ENCODE measurements at regions of chr10 and their contacts with region 1.

Region 1: DNA sequence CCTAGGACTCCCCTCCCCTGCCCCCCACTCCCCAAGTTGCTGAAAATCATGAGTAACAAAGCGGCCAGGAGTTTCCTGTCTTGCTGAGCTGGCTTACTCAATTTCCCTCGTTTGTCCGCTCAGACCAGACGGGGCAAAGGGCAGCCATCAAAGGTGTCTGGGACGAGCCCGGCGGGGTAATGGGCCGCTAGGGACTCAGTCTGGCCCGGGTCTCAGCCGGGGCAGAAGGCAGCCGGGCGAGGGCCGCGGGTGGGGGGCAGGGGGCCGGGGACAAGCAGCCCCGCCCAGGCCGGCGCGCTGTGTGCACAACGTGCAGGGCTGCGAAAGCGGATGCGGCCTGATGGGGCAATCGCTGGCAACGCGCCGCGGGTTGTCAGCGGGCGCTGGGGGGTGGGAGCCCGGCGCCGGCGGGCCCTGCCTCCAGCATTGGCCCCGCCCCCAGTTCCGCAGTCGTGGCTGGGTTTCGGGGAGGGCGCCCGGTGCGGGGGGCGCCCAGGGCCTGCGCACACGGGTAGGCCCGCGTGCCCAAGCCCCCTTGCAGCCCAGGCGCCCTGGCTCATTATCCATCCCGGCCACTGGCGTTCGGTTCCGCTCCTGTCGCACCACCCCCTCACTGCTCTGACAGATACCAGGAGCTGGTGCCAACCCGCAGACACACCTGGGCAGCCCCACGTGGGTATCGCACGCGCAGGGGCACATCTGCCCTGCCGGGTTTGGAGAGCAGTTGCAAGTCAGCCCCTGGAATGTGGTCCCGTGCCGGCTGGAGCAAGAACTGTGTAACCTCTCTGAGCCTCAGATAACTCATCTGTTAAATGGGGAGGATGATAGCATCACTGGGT is 35.1 kb downstream of the DNAJB12 start:
- DNase-seq: peak; percentile 97
- ATAC-seq: peak; percentile 74 to 81 (median 79)
- H3K4me3 ChIP-seq: peak overlapping the region; percentile 56
- H3K27ac ChIP-seq: peak overlapping the region; percentile 87
- H3K4me1 ChIP-seq: peaks cover 51% of the 10 kb centered on the region
- H3K27me3 ChIP-seq: no peaks in the 10 kb centered on the region
- CTCF ChIP-seq: no peak

Region 2: DNA sequence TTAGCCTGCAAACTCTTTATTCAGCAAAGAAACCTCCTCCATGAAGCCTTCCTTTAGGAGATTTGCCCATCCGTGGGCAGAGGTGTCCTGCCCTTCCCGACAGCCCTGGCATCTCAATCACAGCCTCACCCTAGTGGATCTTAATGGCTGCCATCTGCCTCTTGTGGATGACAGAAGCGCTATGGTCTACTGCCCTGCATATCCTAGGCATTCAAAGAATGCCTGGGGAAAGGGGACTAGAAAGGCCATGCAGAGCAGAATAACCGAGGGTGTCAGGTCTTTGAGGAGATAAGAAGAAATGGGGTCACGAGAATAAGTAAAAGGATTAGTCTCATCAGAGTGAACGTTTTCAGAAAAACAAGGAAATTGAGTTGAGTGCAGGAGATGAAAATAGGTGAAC is 173.6 kb before region 1 on chr10:
- intact Hi-C with region 1: no loop called
- DNase-seq: no peak
- ATAC-seq: no peak
- H3K4me3 ChIP-seq: no peak overlapping the region
- H3K27ac ChIP-seq: no peak overlapping the region
- H3K4me1 ChIP-seq: no peaks in the 10 kb centered on the region
- H3K27me3 ChIP-seq: no peaks in the 10 kb centered on the region
- CTCF ChIP-seq: no peak

Region 3: GRCh38 chr10:72215652-72216549 is 103.7 kb before region 1 on chr10 and contains the starts of genes ANAPC16 and ASCC1:
- intact Hi-C with region 1: no loop called
- DNase-seq: peak; percentile 92 to 96
- ATAC-seq: peak; percentile 96 to 98 (median 98)
- H3K4me3 ChIP-seq: peak within 1 kb of the TSS; percentile 78
- H3K27ac ChIP-seq: peak within 1 kb of the TSS; percentile 97
- H3K4me1 ChIP-seq: peaks cover 50% of the 10 kb centered on the region
- H3K27me3 ChIP-seq: no peaks in the 10 kb centered on the region
- CTCF ChIP-seq: no peak
- total RNA-seq, gene ANAPC16: 80.3 to 144 (median 119) TPM
- total RNA-seq, gene ASCC1: 15.3 to 22.4 (median 19.4) TPM

Region 4: DNA sequence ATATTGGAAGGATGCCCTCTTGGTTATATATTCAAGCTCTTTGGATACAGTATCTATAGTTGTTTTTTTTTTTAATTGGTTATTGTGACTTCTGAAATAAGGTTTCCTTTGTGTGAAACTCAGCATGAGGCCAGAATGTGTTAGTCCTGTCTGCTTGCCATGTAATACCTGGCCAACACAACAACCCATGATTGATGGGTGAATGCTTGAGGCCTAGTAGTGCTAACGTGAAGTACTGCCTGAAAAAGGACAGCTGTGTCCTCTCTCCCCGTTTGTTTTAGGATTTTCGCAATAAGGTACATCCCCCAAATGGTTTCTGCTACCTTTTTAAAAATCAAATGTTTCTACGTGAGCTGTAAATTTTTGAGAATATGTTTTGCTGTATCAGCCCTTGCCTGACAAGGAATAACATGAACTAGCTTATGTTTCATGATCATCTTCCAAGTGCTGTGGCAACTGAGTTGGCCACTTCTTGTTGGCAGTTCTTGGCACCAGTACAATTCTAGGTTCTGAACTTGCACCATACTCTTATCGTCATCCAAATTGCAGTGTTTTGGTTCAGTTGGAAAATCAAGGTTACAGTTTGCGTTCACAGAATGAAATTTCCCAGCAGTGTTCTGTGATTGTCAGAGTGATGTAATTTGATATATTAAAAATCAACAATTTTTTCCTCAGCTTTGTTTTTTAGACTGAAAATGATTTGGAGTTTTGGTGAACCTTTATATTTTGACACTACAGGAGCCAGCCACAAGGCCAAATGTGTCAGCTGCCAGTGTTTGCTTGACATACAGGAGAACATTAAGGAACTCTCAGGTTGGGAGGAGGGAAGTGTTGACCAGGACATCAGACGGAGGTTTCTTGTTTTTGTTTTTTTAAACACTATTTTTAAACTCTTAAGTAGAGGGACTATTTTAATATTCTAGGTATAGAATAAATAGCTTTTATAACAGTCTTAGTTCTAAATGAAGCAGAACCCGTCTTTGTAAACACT is 90.1 kb before region 1 on chr10:
- intact Hi-C with region 1: loop called in 1 of 2 experiments (anchors 10 kb)
- DNase-seq: no peak
- ATAC-seq: peak; percentile 78 to 83 (median 80)
- H3K4me3 ChIP-seq: no peak overlapping the region
- H3K27ac ChIP-seq: peak overlapping the region; percentile 91
- H3K4me1 ChIP-seq: peaks cover 43% of the 10 kb centered on the region
- H3K27me3 ChIP-seq: no peaks in the 10 kb centered on the region
- CTCF ChIP-seq: no peak

Region 5: DNA sequence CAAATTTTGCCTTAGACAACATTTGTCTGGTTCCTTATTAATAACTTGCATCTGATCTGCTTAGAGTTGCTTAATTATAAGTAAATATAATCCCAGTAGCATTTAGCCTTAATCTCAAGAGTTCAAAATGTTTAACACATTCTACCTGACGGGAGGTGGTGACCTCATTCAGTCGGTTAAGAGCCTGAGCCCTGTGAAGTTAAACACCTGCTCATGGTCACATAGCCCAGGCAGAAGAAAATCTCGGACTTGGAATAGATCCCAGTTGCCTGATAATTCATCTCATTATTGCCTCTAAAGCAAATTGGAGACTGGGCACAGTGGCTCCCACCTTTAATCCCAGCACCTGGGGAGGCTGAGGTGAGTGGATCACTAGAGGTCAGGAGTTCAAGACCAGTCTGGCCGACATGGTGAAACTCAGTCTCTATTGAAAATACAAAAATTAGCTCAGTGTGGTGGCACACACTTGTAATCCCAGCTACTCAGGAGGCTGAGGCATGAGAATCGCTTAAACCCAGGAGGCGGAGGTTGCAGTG is 85.0 kb before region 1 on chr10:
- intact Hi-C with region 1: loop called (anchors 5 to 10 kb)
- DNase-seq: no peak
- ATAC-seq: no peak
- H3K4me3 ChIP-seq: no peak overlapping the region
- H3K27ac ChIP-seq: peak overlapping the region; percentile 91
- H3K4me1 ChIP-seq: peaks cover 58% of the 10 kb centered on the region
- H3K27me3 ChIP-seq: no peaks in the 10 kb centered on the region
- CTCF ChIP-seq: no peak

Region 6: DNA sequence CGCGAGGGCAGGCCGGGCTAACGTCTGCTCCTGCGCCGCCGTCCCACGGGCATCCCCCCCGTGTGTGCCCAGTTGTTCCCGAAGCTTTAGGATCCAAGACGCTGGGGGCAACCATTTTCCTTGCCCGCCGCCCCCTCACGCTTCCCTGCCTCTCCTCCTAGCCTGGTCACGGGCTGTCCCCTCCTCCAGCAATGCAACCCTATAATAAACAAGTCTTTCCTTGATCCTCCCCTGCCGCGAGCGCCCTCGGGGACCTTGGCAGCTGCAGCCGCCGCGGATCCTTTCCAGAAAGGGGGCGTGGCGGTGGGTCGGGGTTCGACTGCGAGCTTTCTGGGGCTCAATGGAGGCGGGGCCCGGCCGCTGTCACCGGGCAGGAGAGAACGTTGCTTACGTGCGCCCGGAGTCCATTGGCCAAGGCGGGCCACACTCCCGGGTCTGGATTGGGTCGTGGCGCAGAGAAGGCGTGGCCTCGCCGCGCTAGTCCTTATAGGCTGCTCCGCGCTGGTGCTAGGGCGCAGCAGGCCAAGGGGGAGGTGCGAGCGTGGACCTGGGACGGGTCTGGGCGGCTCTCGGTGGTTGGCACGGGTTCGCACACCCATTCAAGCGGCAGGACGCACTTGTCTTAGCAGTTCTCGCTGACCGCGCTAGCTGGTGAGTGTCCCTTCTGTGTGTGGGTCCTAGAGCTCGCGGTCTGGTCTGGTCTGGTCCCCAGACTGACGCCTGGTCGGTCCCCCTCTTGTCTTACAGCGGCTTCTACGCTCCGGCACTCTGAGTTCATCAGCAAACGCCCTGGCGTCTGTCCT is 46.0 kb before region 1 on chr10 and contains the start of gene DDIT4:
- intact Hi-C with region 1: loop called (anchors 5 kb)
- DNase-seq: peak; percentile 100
- ATAC-seq: peak; percentile 80 to 90 (median 84)
- H3K4me3 ChIP-seq: peak within 1 kb of the TSS; percentile 89
- H3K27ac ChIP-seq: peak within 1 kb of the TSS; percentile 98
- H3K4me1 ChIP-seq: peaks cover 24% of the 10 kb centered on the region
- H3K27me3 ChIP-seq: no peaks in the 10 kb centered on the region
- CTCF ChIP-seq: no peak
- total RNA-seq, gene DDIT4: 16.1 to 220 (median 65.4) TPM